A673 (cell line): ENCODE measurements at regions of chr12 and their contacts with region 1.

Region 1: DNA sequence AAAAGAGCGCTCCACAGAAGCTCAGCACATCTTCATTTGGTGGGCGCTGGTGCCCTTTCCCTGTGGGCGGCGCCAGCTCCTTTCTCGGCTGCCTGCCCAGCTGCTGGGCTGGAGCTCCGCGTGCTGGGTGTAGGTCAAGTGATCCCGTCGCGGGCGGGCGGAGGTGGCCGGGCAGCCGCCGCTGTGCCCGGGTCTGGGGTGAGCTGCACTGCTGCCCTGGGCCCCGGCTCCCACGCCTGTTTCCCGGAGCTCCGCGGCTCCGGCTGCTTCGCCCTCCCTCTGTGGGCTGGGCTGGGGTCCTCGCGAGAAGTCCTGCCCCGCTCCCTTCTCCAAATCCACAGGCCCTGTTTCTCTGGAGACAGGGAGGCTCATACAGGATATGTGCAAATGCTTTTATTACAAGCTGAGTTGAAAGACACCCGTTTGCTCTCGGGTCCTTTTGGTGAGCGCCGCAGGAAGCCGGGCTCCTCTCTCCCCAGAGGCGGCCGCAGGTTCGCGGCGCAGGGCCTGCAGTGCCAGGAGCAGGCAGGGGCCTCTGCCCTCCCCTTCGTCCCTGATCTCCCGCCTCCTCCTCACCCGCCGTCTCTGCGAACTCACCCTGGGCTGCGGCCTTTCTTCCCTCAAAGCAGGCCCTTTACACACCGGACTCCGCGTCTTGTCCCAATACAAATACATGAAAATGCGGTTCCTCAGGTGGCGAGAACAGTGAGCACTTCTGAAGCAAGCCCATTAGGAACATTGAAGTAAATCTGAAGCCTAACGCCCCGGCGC is 67.8 kb upstream of the CAPRIN2 start:
- DNase-seq: no peak
- H3K4me3 ChIP-seq: peak overlapping the region; percentile 4
- H3K27ac ChIP-seq: no peak overlapping the region
- H3K4me1 ChIP-seq: no peaks in the 10 kb centered on the region
- H3K27me3 ChIP-seq: no peaks in the 10 kb centered on the region
- CTCF ChIP-seq: no peak

Region 2: GRCh38 chr12:29710104-29710503 is 1112.5 kb before region 1 on chr12:
- CTCF ChIA-PET with region 1: interaction called, 15 read pairs
- POLR2A ChIA-PET with region 1: no interaction called
- intact Hi-C with region 1: no loop called
- DNase-seq: peak; percentile 76
- H3K4me3 ChIP-seq: no peak overlapping the region
- H3K27ac ChIP-seq: no peak overlapping the region
- H3K4me1 ChIP-seq: peaks cover 14% of the 10 kb centered on the region
- H3K27me3 ChIP-seq: peaks cover 13% of the 10 kb centered on the region
- CTCF ChIP-seq: no peak

Region 3: GRCh38 chr12:30515351-30515750 is 307.2 kb before region 1 on chr12:
- CTCF ChIA-PET with region 1: no interaction called
- POLR2A ChIA-PET with region 1: no interaction called
- intact Hi-C with region 1: no loop called
- DNase-seq: peak; percentile 47
- H3K4me3 ChIP-seq: no peak overlapping the region
- H3K27ac ChIP-seq: no peak overlapping the region
- H3K4me1 ChIP-seq: peaks cover 10% of the 10 kb centered on the region
- H3K27me3 ChIP-seq: no peaks in the 10 kb centered on the region
- CTCF ChIP-seq: peak; percentile 58